ENCODE measurements at regions of chr7 and their contacts with region 1.

Region 1: GRCh38 chr7:52712938-52713337 is 322.5 kb upstream of the POM121L12 start:
- DNase-seq: no peak
- H3K4me3 ChIP-seq: no peak overlapping the region
- H3K27ac ChIP-seq: no peak overlapping the region
- H3K4me1 ChIP-seq: no peaks in the 10 kb centered on the region
- H3K27me3 ChIP-seq: no peaks in the 10 kb centered on the region
- CTCF ChIP-seq: no peak
- EP300 ChIP-seq: no peak
- POLR2A ChIP-seq: no peak

Region 2: DNA sequence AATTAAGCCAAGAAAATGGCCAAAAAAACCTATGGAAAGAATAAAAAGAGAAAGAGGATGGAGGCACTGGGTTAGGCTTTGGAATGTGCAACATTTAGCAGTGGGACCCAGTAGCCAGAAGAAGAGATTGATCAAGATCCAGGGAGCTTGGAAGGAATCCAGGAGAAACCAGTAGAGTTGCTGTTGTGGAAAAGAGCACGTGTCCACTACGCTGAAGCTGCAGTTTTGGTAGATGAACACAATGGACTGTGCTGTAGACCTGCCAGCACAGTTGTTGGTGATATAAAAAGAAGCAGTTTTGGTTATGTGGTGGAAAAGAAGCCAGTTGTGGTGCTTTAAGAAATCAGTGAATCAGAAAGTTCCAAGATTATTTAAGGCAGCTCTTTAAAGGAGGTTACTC is 479.7 kb before region 1 on chr7:
- intact Hi-C with region 1: no loop called
- DNase-seq: peak; percentile 66
- H3K4me3 ChIP-seq: no peak overlapping the region
- H3K27ac ChIP-seq: no peak overlapping the region
- H3K4me1 ChIP-seq: no peaks in the 10 kb centered on the region
- H3K27me3 ChIP-seq: no peaks in the 10 kb centered on the region
- CTCF ChIP-seq: no peak
- EP300 ChIP-seq: no peak
- POLR2A ChIP-seq: no peak

Region 3: GRCh38 chr7:52609511-52609910 is 103.4 kb before region 1 on chr7:
- intact Hi-C with region 1: no loop called
- DNase-seq: no peak
- H3K4me3 ChIP-seq: no peak overlapping the region
- H3K27ac ChIP-seq: no peak overlapping the region
- H3K4me1 ChIP-seq: no peaks in the 10 kb centered on the region
- H3K27me3 ChIP-seq: no peaks in the 10 kb centered on the region
- CTCF ChIP-seq: no peak
- EP300 ChIP-seq: no peak
- POLR2A ChIP-seq: no peak

Region 4: DNA sequence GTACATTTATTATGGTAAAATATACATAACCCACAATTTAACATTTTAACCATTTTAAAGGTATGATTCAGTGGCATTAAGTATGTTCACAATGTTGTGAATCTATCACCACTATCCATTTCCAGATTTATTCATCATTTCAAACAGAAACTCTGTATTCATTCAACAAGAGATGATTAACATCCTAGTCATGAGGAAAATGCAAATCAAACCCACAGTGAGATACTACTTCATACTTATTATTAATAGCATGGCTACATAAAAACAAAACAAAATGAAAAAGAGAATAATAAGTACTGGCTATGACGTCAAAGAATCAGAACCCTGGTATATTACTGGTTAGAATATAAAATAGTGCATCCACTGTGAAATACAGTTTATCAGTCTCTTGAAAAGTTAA is 64.1 kb before region 1 on chr7:
- intact Hi-C with region 1: no loop called
- DNase-seq: no peak
- H3K4me3 ChIP-seq: no peak overlapping the region
- H3K27ac ChIP-seq: no peak overlapping the region
- H3K4me1 ChIP-seq: no peaks in the 10 kb centered on the region
- H3K27me3 ChIP-seq: no peaks in the 10 kb centered on the region
- CTCF ChIP-seq: no peak
- EP300 ChIP-seq: no peak
- POLR2A ChIP-seq: no peak

Region 5: GRCh38 chr7:52764492-52765169 is 51.7 kb after region 1 on chr7:
- intact Hi-C with region 1: loop called (anchors 5 kb)
- DNase-seq: no peak
- H3K4me3 ChIP-seq: no peak overlapping the region
- H3K27ac ChIP-seq: no peak overlapping the region
- H3K4me1 ChIP-seq: no peaks in the 10 kb centered on the region
- H3K27me3 ChIP-seq: no peaks in the 10 kb centered on the region
- CTCF ChIP-seq: no peak
- EP300 ChIP-seq: no peak
- POLR2A ChIP-seq: no peak